AG04449 (cell line): ENCODE measurements at regions of chr17 and their contacts with region 1.

Region 1: GRCh38 chr17:58517734-58518609 is 3.5 kb upstream of the MTMR4 start:
- DNase-seq: peak; percentile 99
- H3K4me3 ChIP-seq: peak overlapping the region; percentile 84
- CTCF ChIP-seq: no peak

Region 2: GRCh38 chr17:58427807-58428206 is 90.2 kb before region 1 on chr17:
- CTCF ChIA-PET with region 1: no interaction called
- POLR2A ChIA-PET with region 1: no interaction called
- DNase-seq: no peak
- H3K4me3 ChIP-seq: no peak overlapping the region
- CTCF ChIP-seq: no peak

Region 3: DNA sequence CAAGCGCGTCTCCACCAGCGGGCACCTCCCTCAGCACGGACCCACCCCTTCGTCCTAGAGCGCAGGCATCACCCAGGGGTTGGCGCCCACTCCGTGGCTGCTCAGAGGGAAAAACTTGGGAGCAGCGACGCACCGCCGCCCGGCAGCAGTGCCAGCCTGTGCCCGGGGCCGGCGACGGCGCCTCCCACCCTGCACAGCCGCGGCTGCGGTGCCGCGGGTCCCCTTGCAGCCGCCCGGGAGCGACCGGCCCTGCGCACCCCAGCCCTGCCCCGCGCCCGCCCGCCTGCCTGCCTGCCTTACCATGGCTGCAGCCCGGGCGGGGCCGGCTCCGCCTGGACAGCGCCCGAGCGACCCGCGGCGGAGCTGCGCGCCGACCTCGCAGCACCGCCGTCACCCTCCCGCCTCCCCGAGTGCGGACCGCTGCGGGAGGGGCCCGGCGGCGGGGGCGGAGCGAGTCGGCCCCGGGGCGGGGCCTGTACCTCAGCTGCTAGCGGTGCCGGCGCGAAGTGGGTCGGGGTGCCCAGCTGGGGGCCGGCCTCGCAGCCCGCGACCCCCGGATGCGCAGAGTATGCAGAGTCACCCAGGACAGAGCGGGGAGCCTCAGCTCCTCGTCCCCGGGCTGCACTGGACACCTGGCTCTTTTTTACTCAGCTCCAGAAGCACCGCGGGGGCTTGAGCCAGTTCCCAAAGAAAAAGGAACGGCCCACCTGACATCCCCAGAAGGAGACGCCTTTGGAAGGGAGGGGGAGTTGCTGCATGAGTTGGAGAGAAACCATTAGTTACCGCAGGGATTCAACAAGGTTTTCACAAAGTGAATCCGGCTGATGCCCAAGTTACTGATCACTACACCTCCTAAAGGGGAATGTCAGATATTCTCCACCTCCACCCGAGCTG is 13.9 kb after region 1 on chr17:
- CTCF ChIA-PET with region 1: interaction called, 20 read pairs
- POLR2A ChIA-PET with region 1: no interaction called
- DNase-seq: no peak
- H3K4me3 ChIP-seq: peak overlapping the region; percentile 55
- CTCF ChIP-seq: no peak

Region 4: GRCh38 chr17:58631523-58632323 is 113.8 kb after region 1 on chr17:
- CTCF ChIA-PET with region 1: interaction called, 17 read pairs
- POLR2A ChIA-PET with region 1: interaction called, 65 read pairs
- DNase-seq: peak; percentile 98
- H3K4me3 ChIP-seq: peak overlapping the region; percentile 52
- CTCF ChIP-seq: peak; percentile 29

Region 5: DNA sequence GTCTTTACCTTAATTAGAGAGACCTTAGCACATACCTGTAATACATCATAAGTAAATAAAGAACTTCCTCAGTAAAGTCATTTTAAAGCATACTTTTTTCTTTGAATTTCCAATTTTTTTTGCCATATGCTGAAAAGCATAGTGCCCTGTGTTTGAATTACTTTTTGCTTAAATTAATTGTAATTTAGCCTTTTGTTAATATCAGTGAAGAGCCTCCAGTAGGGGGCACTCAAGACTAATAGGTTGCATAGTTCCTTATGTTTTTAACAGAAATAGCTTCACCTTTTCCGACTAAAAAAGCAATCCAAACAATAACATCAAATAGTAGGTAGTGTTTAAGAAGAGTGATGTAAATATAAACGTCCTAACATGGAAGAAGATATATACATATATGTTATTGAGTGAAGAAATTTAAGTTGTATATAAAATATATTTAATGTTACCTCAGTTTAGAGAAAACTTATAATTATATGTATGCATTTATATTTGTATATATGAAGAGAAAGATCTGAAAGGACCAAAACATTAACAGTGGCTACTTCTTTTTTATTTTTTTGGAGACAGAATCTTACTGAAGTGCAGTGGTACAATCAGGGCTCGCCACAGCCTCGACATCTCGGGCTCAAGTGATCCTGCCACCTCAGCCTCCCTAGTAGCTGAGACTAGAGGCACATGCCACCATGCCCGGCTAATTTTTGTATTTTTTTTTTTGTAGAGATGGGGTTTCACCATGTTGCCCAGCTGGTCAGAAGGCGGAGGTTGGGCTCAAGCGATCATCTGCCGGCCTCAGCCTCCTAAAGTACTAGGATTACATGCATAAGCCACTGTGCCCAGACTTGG is 193.2 kb after region 1 on chr17:
- CTCF ChIA-PET with region 1: interaction called, 10 read pairs
- POLR2A ChIA-PET with region 1: no interaction called
- DNase-seq: no peak
- H3K4me3 ChIP-seq: no peak overlapping the region
- CTCF ChIP-seq: peak; percentile 41